PC-9 (cell line): ENCODE measurements at regions of chr11 and their contacts with region 1.

Region 1: DNA sequence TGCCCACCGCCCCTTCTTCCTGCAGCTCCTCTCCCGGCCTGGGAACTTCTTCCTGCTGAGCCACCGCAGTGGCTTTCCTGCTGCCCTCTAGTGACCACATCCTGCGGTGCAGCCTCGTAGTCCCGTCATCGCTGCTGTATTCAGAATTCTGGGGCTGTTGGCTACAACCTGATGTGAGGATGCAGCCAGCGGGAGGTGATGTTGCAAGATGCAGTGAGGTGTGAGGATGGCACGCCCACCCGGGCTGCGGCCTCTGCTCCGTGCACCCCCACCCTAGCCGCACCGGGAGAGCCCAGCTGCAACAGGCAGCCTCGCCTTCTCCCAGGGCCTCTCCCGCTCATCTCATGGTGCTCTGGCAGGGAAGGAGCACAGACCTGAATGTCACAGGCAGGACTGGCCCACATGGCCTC is 10.1 kb downstream of the CHST1 start:
- DNase-seq: peak in 1 of 2 experiments; percentile 64
- H3K4me3 ChIP-seq: no peak overlapping the region
- H3K27ac ChIP-seq: no peak overlapping the region
- H3K4me1 ChIP-seq: no peaks in the 10 kb centered on the region
- H3K27me3 ChIP-seq: peaks cover 94% of the 10 kb centered on the region
- CTCF ChIP-seq: peak; percentile 92

Region 2: GRCh38 chr11:45339729-45340519 is 315.4 kb before region 1 on chr11:
- CTCF ChIA-PET with region 1: no interaction called
- POLR2A ChIA-PET with region 1: no interaction called
- intact Hi-C with region 1: loop called (anchors 1 kb)
- DNase-seq: peak; percentile 53 to 83
- H3K4me3 ChIP-seq: no peak overlapping the region
- H3K27ac ChIP-seq: no peak overlapping the region
- H3K4me1 ChIP-seq: no peaks in the 10 kb centered on the region
- H3K27me3 ChIP-seq: peaks cover 83% of the 10 kb centered on the region
- CTCF ChIP-seq: peak; percentile 88